Activated T-helper 1 cell treated with anti-CD3 and anti-CD28 coated beads, Interleukin-12 subunit alpha, Interleukin-12 subunit beta, Interleukin-2, Interleukin-4 antibody, amounts not matched to agents 30 ng/mL and 10 ng/mL and 1 ng/mL, durations not matched to agents 14 hours and 24 hours and 36 hours (primary cell): ENCODE measurements at regions of chr6 and their contacts with region 1.

Region 1: DNA sequence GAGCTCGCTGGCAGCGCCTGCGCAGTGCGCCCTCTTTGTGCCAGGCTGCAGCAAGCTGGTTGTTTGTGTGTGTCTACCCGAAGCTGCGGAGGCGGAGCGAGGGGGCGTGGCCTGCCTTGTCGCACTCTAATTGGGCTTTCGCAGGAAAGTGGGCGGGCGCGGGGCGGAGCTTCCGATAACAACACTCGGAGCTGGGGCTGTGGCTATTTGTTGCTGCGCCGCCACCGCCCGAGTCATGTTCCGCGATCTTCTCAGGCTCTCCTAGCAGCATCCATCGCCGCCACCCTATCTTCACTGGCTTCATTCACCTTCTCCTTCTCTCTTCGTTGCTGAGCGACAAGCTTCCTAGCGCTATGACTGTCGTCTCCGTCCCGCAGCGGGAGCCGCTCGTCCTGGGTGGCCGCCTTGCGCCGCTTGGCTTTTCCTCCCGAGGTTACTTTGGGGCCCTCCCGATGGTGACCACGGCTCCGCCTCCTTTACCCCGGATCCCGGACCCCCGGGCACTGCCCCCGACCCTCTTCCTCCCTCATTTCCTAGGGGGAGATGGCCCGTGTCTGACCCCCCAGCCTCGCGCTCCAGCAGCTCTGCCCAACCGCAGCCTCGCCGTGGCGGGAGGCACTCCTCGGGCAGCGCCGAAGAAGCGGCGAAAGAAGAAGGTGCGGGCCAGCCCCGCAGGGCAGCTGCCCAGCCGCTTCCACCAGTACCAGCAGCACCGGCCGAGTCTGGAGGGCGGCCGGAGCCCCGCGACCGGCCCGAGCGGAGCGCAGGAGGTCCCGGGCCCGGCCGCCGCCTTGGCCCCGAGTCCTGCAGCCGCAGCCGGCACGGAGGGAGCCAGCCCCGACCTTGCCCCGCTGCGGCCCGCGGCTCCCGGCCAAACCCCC is at the start of gene PNRC1:
- DNase-seq: peak; percentile 99
- H3K4me3 Mint-ChIP-seq: peak within 1 kb of the TSS; percentile 95
- H3K27ac Mint-ChIP-seq: peak within 1 kb of the TSS; percentile 98
- H3K4me1 Mint-ChIP-seq: peaks cover 39% of the 10 kb centered on the region
- H3K27me3 Mint-ChIP-seq: no peaks in the 10 kb centered on the region
- total RNA-seq, gene PNRC1: 45.6 and 47.6 TPM in 2 replicates

Region 2: DNA sequence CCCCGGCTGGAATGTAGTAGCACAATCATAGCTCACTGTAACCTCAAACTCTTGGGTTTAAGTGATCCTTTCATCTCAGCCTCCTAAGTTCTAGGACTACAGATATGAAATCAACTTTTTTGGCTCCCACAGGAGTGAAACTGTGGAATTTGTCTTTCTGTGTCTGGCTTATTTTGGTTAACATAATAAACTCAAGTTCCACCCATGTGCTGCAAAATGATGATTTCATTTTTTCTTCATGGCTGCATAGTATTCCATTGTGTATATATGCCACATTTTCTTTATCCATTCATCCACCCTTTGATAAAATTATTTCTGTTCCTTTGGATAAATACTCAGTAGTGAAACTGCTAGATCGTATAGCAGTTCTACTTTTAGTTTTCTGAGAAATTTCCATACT is 147.3 kb before region 1 on chr6:
- intact Hi-C with region 1: no loop called
- DNase-seq: no peak
- H3K4me3 Mint-ChIP-seq: no peak overlapping the region
- H3K27ac Mint-ChIP-seq: no peak overlapping the region
- H3K4me1 Mint-ChIP-seq: no peaks in the 10 kb centered on the region
- H3K27me3 Mint-ChIP-seq: no peaks in the 10 kb centered on the region

Region 3: DNA sequence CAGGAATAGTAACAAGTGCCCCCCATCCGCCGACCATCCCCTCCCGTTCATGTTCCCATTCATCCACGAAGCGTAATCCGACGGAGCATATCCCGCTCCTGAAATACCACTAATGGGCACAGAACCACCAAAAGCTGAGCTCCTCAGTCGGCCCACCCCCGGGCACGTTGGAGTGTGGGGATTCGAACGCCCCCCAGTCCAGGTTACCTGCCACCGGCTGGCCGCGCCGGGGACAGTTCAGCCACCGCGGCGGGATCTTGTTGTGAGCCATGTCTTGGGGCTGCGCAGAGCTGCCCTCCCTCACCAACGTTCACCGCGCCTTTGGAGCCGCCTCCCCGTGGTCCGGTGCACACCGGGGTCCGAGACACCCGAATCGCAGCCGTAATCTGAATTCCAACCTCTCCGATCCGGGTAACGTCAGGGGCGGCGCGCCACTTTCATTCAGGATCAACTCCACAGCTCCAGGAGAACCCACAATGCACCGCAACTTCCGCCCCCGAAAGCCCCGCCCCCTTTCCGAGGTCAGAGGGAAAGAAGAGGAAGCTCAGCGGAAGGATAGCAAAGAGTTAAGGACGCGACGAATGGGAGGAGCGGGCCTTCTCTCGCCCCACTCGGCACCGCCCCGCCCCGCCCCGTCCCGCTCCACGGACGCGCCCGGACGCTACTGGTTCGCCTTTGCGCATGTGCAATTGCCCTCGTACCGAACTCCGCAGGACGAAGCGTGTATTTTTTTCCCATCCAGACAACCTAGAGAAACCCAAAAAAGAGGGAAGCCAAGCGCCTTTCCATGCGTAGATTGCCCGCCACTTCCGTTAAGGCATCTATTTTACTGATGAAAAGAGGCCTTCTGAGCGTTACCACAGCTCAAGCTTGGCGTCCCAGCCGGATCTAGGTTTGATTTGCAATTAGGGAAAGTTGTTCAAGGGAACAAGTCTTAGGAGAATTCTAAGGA is 117.4 kb before region 1 on chr6 and contains the start of gene RNGTT:
- intact Hi-C with region 1: loop called (anchors 1 kb)
- DNase-seq: peak; percentile 97
- H3K4me3 Mint-ChIP-seq: peak within 1 kb of the TSS; percentile 98
- H3K27ac Mint-ChIP-seq: peak within 1 kb of the TSS; percentile 84
- H3K4me1 Mint-ChIP-seq: peaks cover 33% of the 10 kb centered on the region
- H3K27me3 Mint-ChIP-seq: peaks cover 7% of the 10 kb centered on the region
- total RNA-seq, gene RNGTT: 21.6 and 25.3 TPM in 2 replicates

Region 4: GRCh38 chr6:89117211-89118108 is 36.7 kb after region 1 on chr6 and contains the start of gene SRSF12:
- intact Hi-C with region 1: loop called (anchors 2 kb)
- DNase-seq: peak; percentile 3
- H3K4me3 Mint-ChIP-seq: peak within 1 kb of the TSS; percentile 75
- H3K27ac Mint-ChIP-seq: no peak within 1 kb of the TSS
- H3K4me1 Mint-ChIP-seq: peaks cover 6% of the 10 kb centered on the region
- H3K27me3 Mint-ChIP-seq: peaks cover 44% of the 10 kb centered on the region
- total RNA-seq, gene SRSF12: 0.07 and 0.10 TPM in 2 replicates

Region 5: DNA sequence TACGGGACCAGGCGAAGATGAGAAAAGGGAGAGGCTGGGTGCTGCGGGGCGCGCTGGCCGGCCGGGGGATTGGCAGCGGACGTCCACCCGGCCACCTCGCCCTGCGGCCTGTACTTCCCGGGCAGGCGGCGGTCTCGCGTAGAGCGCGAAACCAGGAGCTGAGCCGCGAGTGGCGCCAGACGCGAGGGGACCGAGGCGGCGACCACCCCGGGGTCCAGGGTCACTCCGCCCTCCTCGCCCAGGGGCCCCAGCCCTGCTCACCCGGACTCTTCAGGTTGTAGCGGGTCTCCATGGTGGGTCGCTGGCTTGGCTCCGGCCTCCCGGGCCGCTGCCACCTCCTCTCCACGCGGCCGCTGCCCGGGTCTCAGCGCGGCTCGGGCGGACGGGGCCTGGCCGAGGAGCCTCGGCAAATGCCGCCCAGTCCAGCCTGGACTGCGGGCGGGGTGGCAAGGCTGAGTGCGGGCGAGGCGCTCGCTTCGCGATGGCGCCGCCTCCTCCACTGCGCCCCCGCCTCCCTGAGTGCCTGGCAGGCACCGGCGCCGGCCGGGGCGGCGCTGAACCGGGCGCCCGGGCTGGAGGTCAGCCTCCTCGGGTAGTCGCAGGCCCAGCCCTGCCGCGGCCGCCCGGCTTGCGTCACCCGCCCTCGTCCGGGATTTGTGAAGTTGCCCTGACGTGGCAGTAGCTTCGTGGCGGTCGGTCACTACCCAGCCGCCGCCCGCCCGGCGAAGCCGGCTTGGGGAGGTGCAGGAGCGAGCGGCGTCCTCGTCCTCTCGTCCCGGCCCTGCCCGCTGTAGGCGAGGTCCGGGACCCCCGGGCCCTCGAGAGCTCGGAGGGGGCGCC is 271.7 kb after region 1 on chr6 and contains the start of gene UBE2J1:
- intact Hi-C with region 1: loop called (anchors 1 kb)
- DNase-seq: peak; percentile 75
- H3K4me3 Mint-ChIP-seq: peak within 1 kb of the TSS; percentile 96
- H3K27ac Mint-ChIP-seq: peak within 1 kb of the TSS; percentile 96
- H3K4me1 Mint-ChIP-seq: peaks cover 82% of the 10 kb centered on the region
- H3K27me3 Mint-ChIP-seq: no peaks in the 10 kb centered on the region
- total RNA-seq, gene UBE2J1: 38.1 and 40.5 TPM in 2 replicates

Region 6: GRCh38 chr6:89412071-89413005 is 331.6 kb after region 1 on chr6 and contains the start of gene RRAGD:
- intact Hi-C with region 1: loop called (anchors 1 kb)
- DNase-seq: peak; percentile 49
- H3K4me3 Mint-ChIP-seq: peak within 1 kb of the TSS; percentile 95
- H3K27ac Mint-ChIP-seq: peak within 1 kb of the TSS; percentile 94
- H3K4me1 Mint-ChIP-seq: peaks cover 25% of the 10 kb centered on the region
- H3K27me3 Mint-ChIP-seq: peaks cover 50% of the 10 kb centered on the region
- total RNA-seq, gene RRAGD: 7.8 and 10.1 TPM in 2 replicates

Region 7: GRCh38 chr6:90586836-90587638 is 1506.3 kb after region 1 on chr6 and contains the start of gene MAP3K7:
- intact Hi-C with region 1: loop called (anchors 2 kb)
- DNase-seq: peak; percentile 92
- H3K4me3 Mint-ChIP-seq: peak within 1 kb of the TSS; percentile 93
- H3K27ac Mint-ChIP-seq: peak within 1 kb of the TSS; percentile 96
- H3K4me1 Mint-ChIP-seq: peaks cover 39% of the 10 kb centered on the region
- H3K27me3 Mint-ChIP-seq: peaks cover 8% of the 10 kb centered on the region
- total RNA-seq, gene MAP3K7: 31.0 and 35.9 TPM in 2 replicates